ENCODE measurements at regions of chr10 and their contacts with region 1.

Region 1: DNA sequence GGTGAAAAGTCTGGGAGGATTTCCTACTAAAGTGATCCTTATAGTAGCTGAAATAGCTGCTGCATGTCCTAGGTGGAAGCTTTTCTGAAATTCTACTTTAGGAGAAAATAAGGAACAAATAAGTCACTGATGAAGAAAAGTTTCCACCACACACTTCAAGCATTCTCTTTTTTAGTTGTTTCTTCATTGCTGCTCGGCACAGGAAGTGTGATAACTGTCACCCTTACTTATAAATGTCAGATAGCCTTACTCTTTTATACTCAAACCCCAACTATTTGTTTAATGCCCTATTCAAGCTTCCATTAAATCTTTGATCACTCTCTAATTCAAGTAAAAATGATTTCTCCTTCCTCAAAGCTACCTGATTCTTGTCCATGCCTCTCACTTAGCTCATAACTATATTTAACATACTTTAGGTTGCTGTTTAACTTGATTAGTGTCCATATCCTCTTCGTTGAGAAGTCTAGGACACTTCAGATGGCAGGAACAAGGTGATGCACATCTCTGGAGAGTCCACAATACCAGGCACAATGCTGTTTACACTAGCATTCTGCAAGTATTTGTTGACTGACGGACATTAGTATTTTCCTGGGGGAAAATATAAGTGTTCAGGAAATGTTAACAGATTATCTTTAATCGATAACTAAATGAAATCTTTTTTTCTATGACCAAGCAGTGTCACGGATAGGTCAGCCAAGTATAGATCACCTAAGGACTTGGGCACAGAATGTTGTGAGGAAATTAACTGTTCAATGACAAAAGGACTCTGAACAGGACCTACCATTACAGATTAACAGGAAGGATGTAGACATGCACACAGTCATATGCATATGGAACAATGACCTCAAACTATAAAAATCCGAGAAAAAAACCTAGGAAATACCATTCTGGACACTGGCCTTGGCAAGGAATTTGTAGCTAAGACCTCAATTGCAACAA is 67.4 kb downstream of the ZNF438 start:
- DNase-seq: no peak
- H3K4me3 ChIP-seq: no peak overlapping the region
- H3K27ac ChIP-seq: no peak overlapping the region
- H3K4me1 ChIP-seq: peaks cover 0 to 7% (median 3%) of the 10 kb centered on the region in 4 donors
- H3K27me3 ChIP-seq: no peaks in the 10 kb centered on the region
- CTCF ChIP-seq: no peak
- EP300 ChIP-seq: no peak
- POLR2A ChIP-seq: no peak

Region 2: DNA sequence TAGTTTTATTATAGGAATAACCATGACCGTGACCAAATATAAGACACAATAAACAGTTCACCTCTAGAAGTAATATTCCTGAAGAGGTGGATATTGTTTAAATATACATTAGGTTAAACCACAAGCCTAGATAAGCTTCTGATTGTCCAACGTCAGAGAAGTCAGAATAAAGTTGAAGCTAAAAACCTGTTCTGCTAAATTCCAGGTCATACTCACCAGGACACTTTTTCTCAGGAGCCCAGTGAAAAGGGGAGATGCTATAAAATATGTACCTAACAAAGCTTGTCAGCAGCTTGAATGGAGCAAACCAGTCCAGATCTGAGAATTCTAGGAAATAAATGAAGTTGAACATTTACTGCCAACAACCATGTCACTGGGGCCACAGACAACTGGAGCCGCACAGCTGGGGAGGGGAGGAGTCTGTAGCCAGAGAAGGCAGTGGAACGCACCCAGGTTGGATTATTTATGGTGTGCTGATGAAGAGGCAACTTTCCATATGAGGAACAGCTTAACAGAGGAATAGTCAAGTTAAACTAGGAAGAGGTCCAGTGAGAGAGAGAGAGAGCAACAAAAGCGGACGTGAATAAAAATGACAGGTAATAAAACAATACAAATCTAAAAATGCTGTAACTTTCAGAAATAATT is 123.7 kb before region 1 on chr10:
- in situ Hi-C with region 1: no loop called
- intact Hi-C with region 1: loop called (anchors 5 kb)
- DNase-seq: no peak
- H3K4me3 ChIP-seq: no peak overlapping the region
- H3K27ac ChIP-seq: peak overlapping the region in 3 of 4 donors; percentile 19 to 64 (median 52)
- H3K4me1 ChIP-seq: peaks cover 0 to 4% (median 3%) of the 10 kb centered on the region in 4 donors
- H3K27me3 ChIP-seq: no peaks in the 10 kb centered on the region
- CTCF ChIP-seq: no peak
- EP300 ChIP-seq: no peak
- POLR2A ChIP-seq: no peak

Region 3: GRCh38 chr10:30999070-30999712 is 34.9 kb after region 1 on chr10:
- in situ Hi-C with region 1: no loop called
- intact Hi-C with region 1: no loop called
- DNase-seq: no peak
- H3K4me3 ChIP-seq: peak overlapping the region in 2 of 4 donors; percentile 6 to 22
- H3K27ac ChIP-seq: peak overlapping the region; percentile 41 to 64 (median 54)
- H3K4me1 ChIP-seq: peaks cover 0 to 25% (median 6%) of the 10 kb centered on the region in 4 donors
- H3K27me3 ChIP-seq: no peaks in the 10 kb centered on the region
- CTCF ChIP-seq: no peak
- EP300 ChIP-seq: no peak
- POLR2A ChIP-seq: peak; percentile 10

Measured in transverse colon (tissue), 4 donors.